ENCODE measurements at regions of chr15 and their contacts with region 1.

Region 1: DNA sequence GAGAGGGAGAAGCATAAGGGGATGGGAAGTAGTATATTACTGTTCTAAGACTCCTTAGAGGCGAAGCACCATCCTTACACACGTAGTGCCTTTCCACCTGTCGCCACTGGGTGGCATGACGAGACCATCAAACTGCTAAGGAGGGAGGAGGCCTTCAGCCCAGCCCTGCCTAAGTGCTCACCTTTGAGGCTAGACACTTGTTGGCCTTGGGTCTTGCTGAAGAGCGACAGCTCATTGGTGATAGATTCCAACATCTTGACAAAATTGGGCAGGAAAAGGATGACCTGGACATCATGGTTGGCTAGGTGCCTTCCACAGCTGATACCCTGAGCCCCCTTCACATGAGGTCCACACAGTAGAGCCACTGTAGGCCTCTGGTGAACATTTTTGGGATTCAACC is 19.6 kb downstream of the CLK3 start:
- DNase-seq: no peak
- H3K4me3 ChIP-seq: no peak overlapping the region
- H3K27me3 ChIP-seq: no peaks in the 10 kb centered on the region
- CTCF ChIP-seq: peak; percentile 84

Region 2: GRCh38 chr15:74322181-74323076 is 312.8 kb before region 1 on chr15:
- CTCF ChIA-PET with region 1: no interaction called
- POLR2A ChIA-PET with region 1: no interaction called
- DNase-seq: no peak
- H3K4me3 ChIP-seq: no peak overlapping the region
- H3K27me3 ChIP-seq: no peaks in the 10 kb centered on the region
- CTCF ChIP-seq: peak; percentile 93

Region 3: DNA sequence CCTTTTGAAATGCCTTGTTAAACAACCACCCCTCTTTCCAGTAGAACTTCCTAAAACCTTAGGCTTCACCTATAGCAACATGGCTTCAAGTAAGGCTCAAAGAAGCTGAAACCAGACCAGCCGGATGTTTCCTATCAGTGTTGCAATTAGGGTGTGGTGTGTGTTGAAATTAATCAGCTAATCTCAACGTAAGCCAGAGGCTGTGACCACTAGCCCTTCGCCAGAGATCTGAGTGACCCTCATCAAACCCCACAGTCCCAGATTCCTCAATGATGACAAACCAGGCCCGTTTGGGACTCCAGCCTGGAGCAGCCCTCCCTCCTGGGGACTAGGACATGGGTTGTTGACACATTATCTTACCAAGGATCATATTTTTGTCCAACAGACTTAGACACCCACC is 295.1 kb before region 1 on chr15:
- CTCF ChIA-PET with region 1: no interaction called
- POLR2A ChIA-PET with region 1: no interaction called
- DNase-seq: peak; percentile 15
- H3K4me3 ChIP-seq: no peak overlapping the region
- H3K27me3 ChIP-seq: no peaks in the 10 kb centered on the region
- CTCF ChIP-seq: no peak

Region 4: DNA sequence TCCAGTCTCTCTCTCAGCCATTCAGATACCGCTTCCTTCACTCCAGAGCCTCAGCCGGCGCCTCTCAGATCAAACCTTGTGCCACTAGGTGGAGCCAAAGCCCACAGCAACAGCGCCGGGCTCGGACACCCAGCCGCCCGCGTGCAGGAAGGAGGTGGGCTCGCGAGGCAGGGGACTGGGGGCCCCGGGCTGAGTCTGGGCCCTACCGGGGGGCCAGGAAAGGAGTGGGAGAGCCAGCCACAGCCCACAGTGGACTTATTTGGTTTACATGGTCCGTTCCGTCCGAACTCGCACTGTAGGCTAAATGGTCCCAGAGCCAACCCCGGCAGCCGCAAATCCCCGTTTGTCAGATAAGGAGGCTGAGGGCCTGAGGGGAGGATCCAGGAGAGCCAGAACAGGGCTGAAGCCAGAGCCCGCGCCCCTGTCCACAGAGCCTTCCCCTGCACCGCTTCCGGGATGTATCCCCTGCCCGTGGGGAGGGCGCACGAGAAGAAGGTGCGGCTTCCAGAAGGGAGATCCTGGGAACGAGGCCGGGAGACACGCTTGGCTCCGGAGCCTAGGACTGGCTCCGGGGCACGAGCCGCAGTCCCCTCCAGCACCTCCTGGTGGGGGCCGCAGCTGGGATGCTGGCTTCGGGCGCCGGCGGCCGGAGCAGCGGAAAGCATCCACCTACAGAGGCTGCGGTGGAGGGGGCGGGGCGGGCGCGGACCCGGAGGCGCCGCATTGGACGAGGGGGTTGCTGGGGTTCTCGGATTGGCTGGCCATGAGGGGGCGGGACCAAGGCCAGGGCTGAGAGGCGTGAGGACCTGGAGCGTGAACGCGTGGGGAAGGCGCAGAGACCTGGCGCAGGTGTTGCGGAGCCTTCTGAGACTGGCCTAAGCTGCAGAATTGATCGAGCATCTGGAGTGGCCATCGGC is 261.2 kb before region 1 on chr15:
- CTCF ChIA-PET with region 1: interaction called, 79 read pairs
- POLR2A ChIA-PET with region 1: no interaction called
- DNase-seq: no peak
- H3K4me3 ChIP-seq: peak overlapping the region; percentile 69
- H3K27me3 ChIP-seq: peaks cover 5% of the 10 kb centered on the region
- CTCF ChIP-seq: peak; percentile 88

Region 5: DNA sequence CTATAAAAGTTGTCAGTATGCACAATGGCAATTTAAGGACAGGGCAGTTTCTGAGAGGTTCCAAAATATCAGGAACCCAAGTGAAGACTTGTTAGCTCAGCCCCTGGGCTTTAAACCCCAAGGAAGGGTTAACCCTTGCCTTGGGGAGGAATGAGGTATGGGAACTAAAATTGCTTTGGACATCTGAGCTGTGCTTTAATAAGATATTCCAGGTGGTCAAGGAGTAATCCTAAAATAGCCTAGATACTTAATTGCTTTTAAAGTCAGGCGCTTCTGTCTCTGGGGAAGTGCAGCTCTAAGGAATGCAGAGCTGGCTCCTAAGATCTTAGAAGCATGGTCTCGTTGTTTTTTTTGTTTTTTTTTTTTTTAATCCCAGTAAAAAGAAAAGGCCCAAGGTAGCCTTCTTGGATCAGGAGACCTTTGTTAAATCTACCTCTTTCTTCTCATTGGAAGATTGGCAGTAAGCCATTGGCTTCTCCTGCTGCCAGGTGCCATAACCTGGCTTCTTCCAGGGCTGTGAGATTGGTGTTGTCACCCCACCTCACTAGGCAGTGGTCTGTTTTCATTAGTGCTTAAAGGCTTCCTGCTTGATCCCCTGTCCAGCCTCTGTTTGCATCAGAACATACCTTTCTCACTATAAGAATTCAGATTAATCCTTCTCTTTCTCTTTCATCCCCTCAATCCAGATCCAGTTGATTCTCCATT is 69.7 kb before region 1 on chr15:
- CTCF ChIA-PET with region 1: no interaction called
- POLR2A ChIA-PET with region 1: no interaction called
- DNase-seq: no peak
- H3K4me3 ChIP-seq: no peak overlapping the region
- H3K27me3 ChIP-seq: no peaks in the 10 kb centered on the region
- CTCF ChIP-seq: no peak

Region 6: DNA sequence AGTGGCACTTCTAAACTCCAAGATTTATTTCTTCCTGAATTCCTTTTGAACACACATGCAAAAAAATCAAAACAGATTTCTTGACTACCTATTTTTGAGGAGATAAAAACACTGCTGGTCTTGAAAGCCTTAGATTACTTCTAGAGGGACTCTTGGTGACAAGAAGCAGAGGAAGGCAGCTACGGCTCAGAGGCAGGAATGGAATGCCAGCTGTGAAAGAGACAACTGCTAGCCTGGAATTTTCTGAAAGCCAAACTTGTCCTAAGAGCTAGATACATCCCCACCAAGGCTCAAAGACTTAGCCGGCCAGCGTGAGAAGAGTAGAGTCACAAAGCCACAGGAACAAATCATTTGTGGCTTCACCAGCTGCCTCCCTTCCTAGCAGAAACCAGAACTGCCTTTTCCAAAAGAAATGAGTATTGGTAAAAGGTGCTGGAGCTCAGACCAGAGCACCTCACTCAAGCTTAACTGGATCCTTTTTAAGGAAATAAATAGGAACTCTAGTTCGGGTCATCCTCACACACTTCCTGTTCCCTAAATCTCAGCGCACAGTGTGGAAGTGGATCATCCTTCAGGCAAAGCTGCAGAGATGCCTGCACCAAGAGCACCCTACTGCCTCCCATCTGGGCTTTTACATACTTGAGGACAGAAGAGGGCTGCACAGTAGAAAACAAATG is 13.1 kb after region 1 on chr15:
- CTCF ChIA-PET with region 1: interaction called, 21 read pairs
- POLR2A ChIA-PET with region 1: no interaction called
- DNase-seq: no peak
- H3K4me3 ChIP-seq: no peak overlapping the region
- H3K27me3 ChIP-seq: no peaks in the 10 kb centered on the region
- CTCF ChIP-seq: no peak

Region 7: GRCh38 chr15:74793135-74794028 is 158.2 kb after region 1 on chr15:
- CTCF ChIA-PET with region 1: interaction called, 10 read pairs
- POLR2A ChIA-PET with region 1: no interaction called
- DNase-seq: no peak
- H3K4me3 ChIP-seq: no peak overlapping the region
- H3K27me3 ChIP-seq: no peaks in the 10 kb centered on the region
- CTCF ChIP-seq: peak; percentile 24; the same call in 1 of the 2 replicates

Region 8: DNA sequence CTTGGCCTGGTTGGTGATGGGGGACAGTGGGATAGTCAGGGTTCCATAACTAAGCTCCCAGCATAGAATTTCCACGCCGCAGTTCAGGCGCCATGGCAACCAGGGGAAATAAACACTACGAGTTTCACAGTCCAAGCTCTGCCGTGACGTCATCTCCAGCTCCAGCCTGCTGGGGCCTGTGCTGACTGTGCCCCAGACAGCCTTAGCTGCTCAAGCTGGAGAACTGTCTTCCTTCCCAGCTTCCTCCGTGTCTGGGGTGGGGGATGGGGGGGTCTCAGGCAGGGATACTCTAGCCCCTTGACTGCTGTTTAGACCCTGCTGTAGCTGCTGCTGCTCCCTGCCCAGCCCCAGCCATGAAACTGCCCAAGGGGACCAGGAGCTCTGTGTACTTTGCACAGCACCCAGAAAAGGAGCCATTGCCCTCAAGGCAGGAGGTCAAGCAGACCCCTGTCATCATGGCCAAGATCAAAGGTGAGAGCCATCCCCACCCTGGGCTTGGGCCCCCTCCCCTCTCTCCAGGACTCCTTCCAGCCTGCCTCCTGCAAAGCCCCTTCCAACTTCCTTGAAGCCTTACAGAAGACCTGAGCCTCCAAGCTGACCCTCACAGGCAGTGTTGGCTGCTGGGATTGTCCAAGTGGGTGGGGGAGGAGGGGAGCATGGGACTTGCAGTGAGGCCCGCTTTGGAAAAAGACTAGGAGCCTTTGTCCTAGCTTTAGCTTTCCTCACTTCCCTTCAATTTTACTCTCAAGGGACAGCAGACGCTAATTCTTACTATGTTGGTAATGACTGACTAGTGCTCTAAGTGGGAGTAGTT is 1088.8 kb after region 1 on chr15:
- CTCF ChIA-PET with region 1: no interaction called
- POLR2A ChIA-PET with region 1: no interaction called
- DNase-seq: peak; percentile 74
- H3K4me3 ChIP-seq: no peak overlapping the region
- H3K27me3 ChIP-seq: no peaks in the 10 kb centered on the region
- CTCF ChIP-seq: no peak

Measured in BJ (cell line).